ENCODE measurements at regions of chr6 and their contacts with region 1.

Region 1: GRCh38 chr6:90285611-90286381 is 10.8 kb downstream of the BACH2 start:
- DNase-seq: peak; percentile 47
- H3K4me3 Mint-ChIP-seq: peak overlapping the region; percentile 79
- H3K27ac Mint-ChIP-seq: peak overlapping the region; percentile 97
- H3K4me1 Mint-ChIP-seq: peaks cover 89% of the 10 kb centered on the region
- H3K27me3 Mint-ChIP-seq: peaks cover 3% of the 10 kb centered on the region

Region 2: DNA sequence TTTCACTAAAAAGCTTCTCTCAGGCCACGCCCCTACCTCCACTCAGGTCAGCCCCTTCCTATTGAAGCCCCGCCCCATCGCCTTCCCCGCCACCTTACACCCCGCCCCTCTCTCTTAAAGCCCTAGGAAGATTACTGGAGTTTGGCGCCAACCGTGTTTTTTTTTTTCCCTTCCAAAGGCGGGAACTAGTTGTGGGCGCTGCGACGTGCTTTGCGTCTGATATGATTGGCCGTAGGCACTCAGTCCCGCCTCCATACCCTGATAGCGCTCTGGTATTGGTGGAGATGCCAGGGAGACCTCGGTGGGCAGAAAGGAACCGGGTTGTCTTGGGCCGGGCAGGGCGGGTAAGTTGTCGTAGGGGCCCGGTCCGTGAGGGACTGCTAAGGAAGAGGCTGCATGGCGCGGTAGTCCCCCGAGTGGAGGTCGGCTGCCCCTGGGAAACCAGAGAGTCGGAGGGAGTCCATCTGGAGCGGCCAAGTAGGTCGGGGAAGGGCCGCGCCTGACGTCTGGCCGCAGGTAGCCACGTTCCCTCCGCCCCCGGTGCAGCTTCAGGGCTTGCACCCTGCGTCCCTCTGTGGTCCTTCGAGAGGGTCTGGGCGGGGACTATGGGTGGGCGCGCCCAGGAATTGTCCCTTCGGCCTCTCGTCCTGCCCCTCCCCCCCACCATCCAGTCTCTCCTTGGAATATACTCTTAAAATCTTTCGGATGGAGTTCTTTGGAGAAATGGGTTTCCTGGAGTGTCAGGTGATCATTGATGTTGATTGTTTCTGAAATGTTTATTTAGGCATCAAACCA is 456.0 kb before region 1 on chr6 and contains the start of gene CASP8AP2:
- intact Hi-C with region 1: loop called (anchors 5 kb)
- DNase-seq: peak; percentile 93
- H3K4me3 Mint-ChIP-seq: peak within 1 kb of the TSS; percentile 97
- H3K27ac Mint-ChIP-seq: peak within 1 kb of the TSS; percentile 91
- H3K4me1 Mint-ChIP-seq: peaks cover 23% of the 10 kb centered on the region
- H3K27me3 Mint-ChIP-seq: no peaks in the 10 kb centered on the region
- total RNA-seq, gene CASP8AP2: 38.3 and 40.2 TPM in 2 replicates

Region 3: GRCh38 chr6:90144396-90144795 is 141.4 kb before region 1 on chr6:
- intact Hi-C with region 1: loop called (anchors 1 kb)
- DNase-seq: no peak
- H3K4me3 Mint-ChIP-seq: peak overlapping the region; percentile 45
- H3K27ac Mint-ChIP-seq: peak overlapping the region; percentile 78
- H3K4me1 Mint-ChIP-seq: peaks cover 66% of the 10 kb centered on the region
- H3K27me3 Mint-ChIP-seq: peaks cover 15% of the 10 kb centered on the region

Region 4: GRCh38 chr6:90230548-90231215 is 55.1 kb before region 1 on chr6:
- intact Hi-C with region 1: loop called (anchors 1 kb)
- DNase-seq: no peak
- H3K4me3 Mint-ChIP-seq: peak overlapping the region; percentile 10
- H3K27ac Mint-ChIP-seq: peak overlapping the region; percentile 31
- H3K4me1 Mint-ChIP-seq: peaks cover 89% of the 10 kb centered on the region
- H3K27me3 Mint-ChIP-seq: no peaks in the 10 kb centered on the region

Region 5: GRCh38 chr6:90296346-90297114 is 10.7 kb after region 1 on chr6 and contains the start of gene BACH2:
- intact Hi-C with region 1: loop called (anchors 1 kb)
- DNase-seq: peak; percentile 88
- H3K4me3 Mint-ChIP-seq: peak within 1 kb of the TSS; percentile 93
- H3K27ac Mint-ChIP-seq: peak within 1 kb of the TSS; percentile 95
- H3K4me1 Mint-ChIP-seq: peaks cover 39% of the 10 kb centered on the region
- H3K27me3 Mint-ChIP-seq: peaks cover 21% of the 10 kb centered on the region
- total RNA-seq, gene BACH2: 68.1 and 71.2 TPM in 2 replicates

Region 6: DNA sequence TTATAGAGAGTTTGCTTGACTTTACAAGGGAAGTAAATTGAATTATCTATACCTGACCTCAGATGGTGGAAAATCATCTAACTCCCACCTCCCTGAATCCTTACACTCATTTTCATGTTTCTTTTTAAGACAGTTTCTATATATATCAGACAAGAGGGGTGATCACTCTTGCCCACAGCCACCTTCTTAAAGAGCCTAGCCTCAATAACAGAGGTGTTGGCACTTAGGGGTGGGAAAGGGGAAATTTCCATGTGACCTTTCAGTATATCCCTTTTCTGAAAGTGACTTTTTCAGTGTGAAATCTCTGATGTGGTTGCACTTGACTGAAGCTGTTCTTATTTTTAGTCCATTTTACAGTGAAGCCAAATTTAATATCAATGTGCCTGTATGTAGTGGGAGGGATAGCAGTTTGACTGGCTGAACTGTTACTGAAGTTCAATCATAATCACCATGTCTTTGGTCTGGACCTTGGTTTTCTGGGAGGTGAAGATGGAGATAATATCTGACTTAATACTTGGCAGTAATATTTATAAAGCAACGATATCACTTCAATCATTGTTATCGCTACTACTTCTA is 159.8 kb after region 1 on chr6:
- intact Hi-C with region 1: loop called (anchors 1 kb)
- DNase-seq: no peak
- H3K4me3 Mint-ChIP-seq: no peak overlapping the region
- H3K27ac Mint-ChIP-seq: peak overlapping the region; percentile 88
- H3K4me1 Mint-ChIP-seq: peaks cover 66% of the 10 kb centered on the region
- H3K27me3 Mint-ChIP-seq: no peaks in the 10 kb centered on the region